Activated T-helper 2 cell treated with anti-CD3 and anti-CD28 coated beads, Interferon-gamma antibody, Interleukin-2, Interleukin-4, amounts not matched to agents 10 μg/mL and 5 μg/mL and 100 μg/mL, durations not matched to agents 14 hours and 24 hours and 36 hours (primary cell): ENCODE measurements at regions of chr4 and their contacts with region 1.

Region 1: DNA sequence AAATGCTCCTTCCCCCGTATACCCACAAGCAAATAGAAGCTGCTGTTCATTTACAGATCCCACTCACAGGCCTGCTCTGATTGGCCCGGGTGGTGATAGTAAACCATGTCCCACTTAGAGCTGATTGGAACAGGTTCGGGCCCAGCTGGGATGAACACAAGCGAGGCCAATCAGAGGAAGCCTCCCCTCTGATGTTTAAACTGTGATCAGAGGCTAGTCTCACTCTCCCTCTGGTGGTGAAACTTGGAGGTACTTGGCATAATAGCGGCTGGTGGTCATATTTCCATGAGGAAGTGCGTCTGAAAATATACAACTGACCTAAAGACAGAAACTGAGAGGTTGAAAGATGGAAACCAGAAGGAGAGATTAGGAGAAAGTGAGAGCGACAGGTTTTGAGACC is 51.5 kb upstream of the TRPC3 start:
- DNase-seq: no peak
- H3K4me3 Mint-ChIP-seq: no peak overlapping the region
- H3K27ac Mint-ChIP-seq: no peak overlapping the region
- H3K4me1 Mint-ChIP-seq: peaks cover 4% of the 10 kb centered on the region
- H3K27me3 Mint-ChIP-seq: peaks cover 22% of the 10 kb centered on the region

Region 2: GRCh38 chr4:121462660-121463261 is 540.6 kb before region 1 on chr4:
- intact Hi-C with region 1: no loop called
- DNase-seq: no peak
- H3K4me3 Mint-ChIP-seq: no peak overlapping the region
- H3K27ac Mint-ChIP-seq: no peak overlapping the region
- H3K4me1 Mint-ChIP-seq: peaks cover 4% of the 10 kb centered on the region
- H3K27me3 Mint-ChIP-seq: peaks cover 24% of the 10 kb centered on the region

Region 3: DNA sequence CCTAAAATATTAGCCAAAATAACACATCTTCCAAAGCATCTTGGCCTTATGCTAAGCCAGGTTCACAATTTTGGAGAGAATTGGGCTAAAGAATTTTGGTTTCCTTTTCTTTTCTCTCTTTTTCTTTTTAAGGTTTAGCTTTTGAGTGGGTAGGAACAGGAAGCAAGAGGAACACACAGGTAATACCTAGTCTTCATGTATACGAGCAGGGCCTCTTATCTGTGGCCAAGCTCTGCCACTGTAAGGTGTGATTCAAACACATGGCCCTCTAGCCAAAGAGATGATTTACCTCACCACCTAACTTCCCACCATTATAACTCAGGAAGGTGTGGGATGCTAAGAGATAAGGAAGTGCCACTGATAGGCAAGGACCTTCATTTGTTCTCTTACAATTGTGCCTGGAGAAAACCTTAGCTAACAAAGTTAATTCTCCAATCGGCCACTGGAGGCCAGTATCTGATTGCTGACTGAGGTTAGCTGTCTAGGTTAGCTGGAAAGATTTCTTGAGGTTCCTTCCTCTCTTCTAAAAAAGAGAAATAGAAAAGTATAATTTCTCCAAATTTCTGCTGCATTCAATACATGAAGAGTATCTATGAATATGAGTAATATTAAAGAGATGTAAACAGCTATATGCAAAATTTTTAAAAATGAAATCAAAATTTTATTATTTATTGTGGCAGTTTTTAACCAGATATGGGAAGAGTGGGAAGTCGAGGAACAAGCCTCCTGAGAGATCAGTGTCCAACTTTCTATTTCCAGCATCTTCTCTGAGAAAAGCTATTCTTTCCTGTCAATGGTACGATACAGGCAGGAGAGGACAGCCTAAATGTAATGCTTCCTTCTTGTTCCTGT is 103.0 kb before region 1 on chr4:
- intact Hi-C with region 1: loop called (anchors 1 kb)
- DNase-seq: peak; percentile 20
- H3K4me3 Mint-ChIP-seq: no peak overlapping the region
- H3K27ac Mint-ChIP-seq: no peak overlapping the region
- H3K4me1 Mint-ChIP-seq: peaks cover 6% of the 10 kb centered on the region
- H3K27me3 Mint-ChIP-seq: peaks cover 13% of the 10 kb centered on the region